MCF 10A (cell line): ENCODE measurements at regions of chr1 and their contacts with region 1.

Region 1: DNA sequence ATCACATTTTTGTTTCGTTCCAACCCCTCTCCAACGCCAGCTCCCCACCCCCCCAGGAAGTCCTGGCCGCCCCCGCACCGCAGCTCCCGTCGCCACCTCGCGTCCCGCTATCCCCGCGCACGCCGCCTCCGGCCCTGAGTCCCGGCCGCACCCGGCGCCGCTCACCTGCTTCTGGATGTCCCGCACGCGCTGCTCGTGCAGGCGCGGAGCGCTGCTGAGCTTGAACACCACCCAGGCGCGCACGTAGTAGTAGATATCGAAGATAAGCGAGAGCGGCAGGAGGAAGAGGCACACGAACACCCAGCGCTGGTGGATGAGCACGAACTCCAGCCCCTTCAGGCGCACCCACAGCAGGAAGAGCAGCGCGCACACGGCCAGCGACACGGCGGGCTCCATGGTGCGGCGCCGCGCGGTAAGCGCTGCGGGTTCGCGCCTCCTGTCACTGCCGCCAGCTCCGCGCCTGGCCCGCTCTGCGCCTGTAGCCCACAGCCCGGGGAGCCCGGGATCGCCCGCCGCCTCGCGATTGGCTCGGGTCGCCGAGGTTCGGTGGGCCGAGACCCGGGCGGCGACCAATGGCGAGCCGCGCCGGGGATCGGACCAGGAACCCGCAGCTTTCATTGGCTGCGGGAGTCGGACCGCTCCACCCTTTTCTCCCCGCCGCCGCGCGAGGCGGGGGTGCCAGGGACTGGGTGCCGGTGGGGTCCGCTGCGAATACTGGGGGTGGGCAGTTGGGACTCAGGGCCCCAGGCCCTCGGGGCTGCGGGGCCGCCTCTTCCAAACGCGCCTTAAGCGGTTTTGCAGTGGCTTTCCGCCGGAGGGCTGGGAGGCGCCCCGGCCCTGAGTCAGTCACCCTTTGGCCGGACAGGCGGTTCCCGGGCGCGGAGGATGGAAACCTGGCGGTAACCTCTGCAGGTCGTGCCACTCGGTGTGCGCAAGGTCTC is at the start of gene DHCR24:
- DNase-seq: peak; percentile 91
- H3K4me3 Mint-ChIP-seq: peak within 1 kb of the TSS; percentile 99
- H3K27ac Mint-ChIP-seq: peak within 1 kb of the TSS; percentile 90
- H3K4me1 Mint-ChIP-seq: peaks cover 49% of the 10 kb centered on the region
- H3K27me3 Mint-ChIP-seq: no peaks in the 10 kb centered on the region
- CTCF ChIP-seq: no peak
- total RNA-seq, gene DHCR24: 126 and 135 TPM in 2 replicates

Region 2: DNA sequence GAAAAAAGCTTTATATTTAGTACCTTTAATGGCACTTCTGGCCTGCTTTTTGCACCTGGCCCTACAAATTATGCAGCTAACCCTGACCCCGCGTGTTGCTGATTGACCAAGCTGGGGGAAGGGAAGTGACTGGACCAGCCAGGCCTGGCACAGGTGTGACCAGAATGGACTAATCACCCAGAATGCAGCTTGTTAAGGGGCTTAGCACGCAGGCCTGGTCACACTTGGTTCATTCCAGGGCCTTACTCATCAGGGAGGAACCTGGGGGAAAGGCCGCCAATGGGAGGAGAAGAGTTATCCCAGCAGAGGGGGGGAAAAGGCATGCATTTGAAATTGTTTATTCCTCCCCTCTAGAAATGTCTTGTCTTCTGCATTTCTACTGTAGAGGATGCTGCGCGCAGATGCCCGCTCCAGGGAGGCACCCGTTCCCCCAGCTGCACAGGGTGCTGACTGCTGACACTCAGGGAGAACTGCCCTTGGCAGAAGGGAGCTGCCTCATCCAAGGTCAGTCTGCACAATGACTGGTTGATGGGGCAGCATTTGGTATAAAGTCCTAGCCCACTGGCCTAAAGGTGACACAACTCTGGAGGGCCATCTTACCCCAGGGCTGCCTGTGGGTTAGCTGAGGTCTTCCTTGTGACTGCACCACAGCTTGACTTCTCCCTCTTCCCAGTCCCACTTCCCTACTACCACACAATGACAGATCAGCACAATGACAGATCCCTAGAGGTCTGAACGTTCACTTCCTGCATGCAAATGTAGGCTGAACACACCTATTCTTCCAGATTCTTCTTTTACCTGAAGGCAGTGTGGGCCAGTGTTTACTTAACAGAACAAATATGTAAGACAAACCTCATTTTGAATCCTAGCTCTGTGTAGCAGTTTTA is 29.0 kb before region 1 on chr1:
- CTCF ChIA-PET with region 1: interaction called, 3 read pairs
- POLR2A ChIA-PET with region 1: interaction called, 40 read pairs
- intact Hi-C with region 1: loop called (anchors 2 kb)
- DNase-seq: peak; percentile 53
- H3K4me3 Mint-ChIP-seq: no peak overlapping the region
- H3K27ac Mint-ChIP-seq: no peak overlapping the region
- H3K4me1 Mint-ChIP-seq: peaks cover 53% of the 10 kb centered on the region
- H3K27me3 Mint-ChIP-seq: no peaks in the 10 kb centered on the region
- CTCF ChIP-seq: no peak

Region 3: GRCh38 chr1:54872036-54872331 is 15.0 kb before region 1 on chr1:
- CTCF ChIA-PET with region 1: interaction called, 3 read pairs
- POLR2A ChIA-PET with region 1: interaction called, 23 read pairs
- intact Hi-C with region 1: no loop called
- DNase-seq: no peak
- H3K4me3 Mint-ChIP-seq: no peak overlapping the region
- H3K27ac Mint-ChIP-seq: no peak overlapping the region
- H3K4me1 Mint-ChIP-seq: peaks cover 4% of the 10 kb centered on the region
- H3K27me3 Mint-ChIP-seq: no peaks in the 10 kb centered on the region
- CTCF ChIP-seq: no peak

Region 4: GRCh38 chr1:54904476-54905048 is 17.6 kb after region 1 on chr1:
- CTCF ChIA-PET with region 1: no interaction called
- POLR2A ChIA-PET with region 1: interaction called, 41 read pairs
- intact Hi-C with region 1: no loop called
- DNase-seq: peak; percentile 35
- H3K4me3 Mint-ChIP-seq: no peak overlapping the region
- H3K27ac Mint-ChIP-seq: no peak overlapping the region
- H3K4me1 Mint-ChIP-seq: peaks cover 7% of the 10 kb centered on the region
- H3K27me3 Mint-ChIP-seq: no peaks in the 10 kb centered on the region
- CTCF ChIP-seq: no peak

Region 5: DNA sequence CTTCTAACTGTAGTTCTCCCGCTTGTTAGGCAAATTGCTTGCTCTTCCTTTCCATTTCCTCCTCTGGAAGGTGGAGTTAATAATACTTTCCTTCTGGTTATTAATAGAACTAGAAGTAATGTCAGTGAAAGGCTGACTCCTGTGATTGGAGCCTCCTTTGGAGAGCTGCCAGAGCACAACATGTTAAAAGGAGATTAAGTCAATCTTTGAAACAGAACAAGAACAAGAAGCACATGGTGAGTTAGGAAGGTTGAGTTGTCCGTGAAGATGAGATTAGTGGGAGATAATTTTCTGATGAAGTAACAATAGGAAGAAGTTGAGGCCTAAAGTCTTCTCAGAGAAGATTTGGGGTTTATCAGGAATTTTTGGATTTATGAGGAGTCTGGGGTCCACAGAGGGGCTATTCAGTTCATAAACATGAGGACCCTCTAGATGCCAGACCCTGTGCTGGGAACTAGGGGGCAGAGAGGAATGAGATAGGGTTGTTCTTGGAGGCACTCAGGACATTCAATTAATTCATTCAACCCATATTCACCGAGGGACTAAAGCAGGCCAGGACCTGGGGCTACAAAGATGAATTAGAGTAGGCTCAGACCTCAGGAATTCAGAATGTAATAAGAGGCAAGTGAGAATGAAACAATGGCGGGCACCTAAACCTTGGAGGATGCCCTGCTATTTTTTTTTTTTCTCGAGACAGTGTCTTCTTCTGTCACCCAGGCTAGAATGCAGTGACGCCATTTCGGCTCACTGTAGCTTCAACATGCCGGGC is 40.7 kb after region 1 on chr1:
- CTCF ChIA-PET with region 1: no interaction called
- POLR2A ChIA-PET with region 1: interaction called, 52 read pairs
- intact Hi-C with region 1: no loop called
- DNase-seq: no peak
- H3K4me3 Mint-ChIP-seq: no peak overlapping the region
- H3K27ac Mint-ChIP-seq: no peak overlapping the region
- H3K4me1 Mint-ChIP-seq: peaks cover 18% of the 10 kb centered on the region
- H3K27me3 Mint-ChIP-seq: peaks cover 8% of the 10 kb centered on the region
- CTCF ChIP-seq: no peak